ENCODE measurements at regions of chr11 and their contacts with region 1.

Region 1: GRCh38 chr11:75388386-75389275 is 10.7 kb upstream of the RPS3 start:
- DNase-seq: peak; percentile 82
- H3K4me3 Mint-ChIP-seq: no peak overlapping the region
- H3K27ac Mint-ChIP-seq: no peak overlapping the region
- H3K4me1 Mint-ChIP-seq: peaks cover 12% of the 10 kb centered on the region
- H3K27me3 Mint-ChIP-seq: peaks cover 10% of the 10 kb centered on the region

Region 2: GRCh38 chr11:75270896-75271418 is 117.7 kb before region 1 on chr11:
- CTCF ChIA-PET with region 1: interaction called, 17 read pairs
- POLR2A ChIA-PET with region 1: no interaction called
- DNase-seq: peak; percentile 47
- H3K4me3 Mint-ChIP-seq: no peak overlapping the region
- H3K27ac Mint-ChIP-seq: peak overlapping the region; percentile 63
- H3K4me1 Mint-ChIP-seq: peaks cover 38% of the 10 kb centered on the region
- H3K27me3 Mint-ChIP-seq: no peaks in the 10 kb centered on the region

Region 3: DNA sequence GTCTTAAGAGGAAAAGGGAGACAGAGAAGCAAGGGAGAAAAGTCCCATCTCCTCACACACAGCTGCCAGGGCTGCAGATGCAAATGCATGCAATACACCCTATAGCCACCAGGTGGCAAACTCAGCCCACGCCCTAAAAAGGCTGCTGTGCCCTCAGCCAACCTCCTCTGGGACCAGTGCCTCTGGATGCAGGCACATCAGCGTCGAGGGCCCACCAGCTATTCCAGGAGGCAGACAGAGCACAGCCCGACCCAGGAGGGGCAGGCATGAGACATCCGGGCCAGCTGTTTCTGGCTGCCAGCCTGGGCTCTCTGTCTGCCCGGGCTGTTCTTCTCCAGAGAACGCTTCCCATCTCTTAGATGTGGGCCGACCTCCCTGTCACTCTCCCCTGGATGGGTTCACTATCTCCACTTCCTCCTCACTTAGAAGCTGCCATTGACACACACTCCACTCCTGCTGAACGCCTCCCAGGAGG is 108.4 kb before region 1 on chr11:
- CTCF ChIA-PET with region 1: interaction called, 44 read pairs
- POLR2A ChIA-PET with region 1: interaction called, 3 read pairs
- DNase-seq: peak; percentile 80
- H3K4me3 Mint-ChIP-seq: no peak overlapping the region
- H3K27ac Mint-ChIP-seq: peak overlapping the region; percentile 37
- H3K4me1 Mint-ChIP-seq: peaks cover 36% of the 10 kb centered on the region
- H3K27me3 Mint-ChIP-seq: no peaks in the 10 kb centered on the region

Region 4: GRCh38 chr11:75328426-75329277 is 60.0 kb before region 1 on chr11:
- CTCF ChIA-PET with region 1: interaction called, 13 read pairs
- POLR2A ChIA-PET with region 1: no interaction called
- DNase-seq: peak; percentile 82
- H3K4me3 Mint-ChIP-seq: peak overlapping the region; percentile 41
- H3K27ac Mint-ChIP-seq: peak overlapping the region; percentile 93
- H3K4me1 Mint-ChIP-seq: peaks cover 67% of the 10 kb centered on the region
- H3K27me3 Mint-ChIP-seq: no peaks in the 10 kb centered on the region

Region 5: GRCh38 chr11:75342903-75343870 is 45.4 kb before region 1 on chr11:
- CTCF ChIA-PET with region 1: interaction called, 11 read pairs
- POLR2A ChIA-PET with region 1: no interaction called
- DNase-seq: no peak
- H3K4me3 Mint-ChIP-seq: no peak overlapping the region
- H3K27ac Mint-ChIP-seq: peak overlapping the region; percentile 39
- H3K4me1 Mint-ChIP-seq: peaks cover 93% of the 10 kb centered on the region
- H3K27me3 Mint-ChIP-seq: no peaks in the 10 kb centered on the region

Region 6: GRCh38 chr11:75371941-75372789 is 16.5 kb before region 1 on chr11:
- CTCF ChIA-PET with region 1: interaction called, 11 read pairs
- POLR2A ChIA-PET with region 1: no interaction called
- DNase-seq: no peak
- H3K4me3 Mint-ChIP-seq: no peak overlapping the region
- H3K27ac Mint-ChIP-seq: peak overlapping the region; percentile 27
- H3K4me1 Mint-ChIP-seq: peaks cover 29% of the 10 kb centered on the region
- H3K27me3 Mint-ChIP-seq: no peaks in the 10 kb centered on the region

Region 7: GRCh38 chr11:75490221-75491181 is 101.9 kb after region 1 on chr11:
- CTCF ChIA-PET with region 1: no interaction called
- POLR2A ChIA-PET with region 1: no interaction called
- DNase-seq: no peak
- H3K4me3 Mint-ChIP-seq: no peak overlapping the region
- H3K27ac Mint-ChIP-seq: no peak overlapping the region
- H3K4me1 Mint-ChIP-seq: peaks cover 27% of the 10 kb centered on the region
- H3K27me3 Mint-ChIP-seq: no peaks in the 10 kb centered on the region

Region 8: DNA sequence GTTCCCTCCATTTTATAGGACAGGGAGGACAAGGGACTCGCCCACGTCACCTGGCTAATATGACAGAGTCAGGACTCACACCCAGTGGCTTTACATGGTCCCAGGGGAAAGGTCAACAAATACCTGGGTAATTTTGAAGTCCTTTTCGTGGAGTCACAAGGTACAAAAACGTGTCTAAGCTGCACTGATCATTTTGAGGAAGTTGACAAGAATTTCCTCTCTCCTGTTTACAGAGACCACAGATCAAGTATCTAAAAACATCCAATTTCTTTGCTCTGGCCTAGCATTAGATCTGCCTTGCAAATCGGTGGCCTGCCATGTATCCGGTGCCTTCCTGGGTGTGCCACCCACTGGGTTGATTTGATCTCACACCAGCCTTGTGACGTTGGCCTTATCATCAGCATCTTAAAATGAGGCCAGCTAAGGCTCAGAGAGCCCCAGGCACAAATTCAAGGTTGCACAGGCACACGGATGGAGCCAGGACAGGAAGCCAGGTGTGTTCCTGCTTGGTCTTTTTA is 119.5 kb after region 1 on chr11:
- CTCF ChIA-PET with region 1: no interaction called
- POLR2A ChIA-PET with region 1: no interaction called
- DNase-seq: peak; percentile 81
- H3K4me3 Mint-ChIP-seq: peak overlapping the region; percentile 33
- H3K27ac Mint-ChIP-seq: peak overlapping the region; percentile 95
- H3K4me1 Mint-ChIP-seq: peaks cover 29% of the 10 kb centered on the region
- H3K27me3 Mint-ChIP-seq: no peaks in the 10 kb centered on the region

Region 9: DNA sequence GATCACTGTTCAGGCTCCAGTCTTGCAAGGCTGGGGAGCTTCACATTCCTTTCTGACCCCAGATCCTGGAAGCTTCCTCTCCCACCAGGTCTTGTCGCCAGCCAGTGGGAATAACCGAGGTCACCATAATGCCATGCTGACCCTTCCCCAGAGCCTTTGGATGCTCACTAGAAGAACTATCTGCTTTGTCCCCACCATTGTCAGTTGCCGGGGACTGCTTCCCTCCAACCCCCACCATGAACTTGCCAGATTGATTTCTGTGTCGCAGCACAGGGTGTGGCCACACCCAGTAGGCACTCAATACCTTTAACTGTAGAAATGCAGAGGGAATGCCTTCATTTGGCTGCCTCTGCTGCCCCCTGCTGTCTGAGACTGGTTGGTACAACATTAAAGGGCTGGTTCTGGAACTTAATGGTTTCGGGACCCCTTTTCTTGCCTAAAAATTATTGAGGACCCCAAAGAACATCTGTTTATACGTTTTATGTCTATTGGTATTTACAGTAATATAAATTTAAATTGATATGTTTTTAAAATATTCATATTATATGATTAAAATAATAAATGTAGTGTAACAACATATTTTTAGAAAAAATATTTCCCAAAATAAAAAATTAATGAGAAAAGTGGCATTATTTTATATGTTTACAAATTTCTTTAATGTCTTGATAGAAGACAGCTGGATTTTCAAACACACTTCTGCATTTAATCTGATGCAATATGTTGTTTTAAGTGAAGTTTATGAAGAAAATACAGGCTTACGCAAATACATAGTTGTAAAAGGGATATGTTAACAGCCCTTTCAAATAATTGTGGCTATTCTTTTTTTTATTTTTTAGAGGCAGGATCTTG is 143.8 kb after region 1 on chr11:
- CTCF ChIA-PET with region 1: interaction called, 23 read pairs
- POLR2A ChIA-PET with region 1: no interaction called
- DNase-seq: peak; percentile 89
- H3K4me3 Mint-ChIP-seq: peak overlapping the region; percentile 10
- H3K27ac Mint-ChIP-seq: peak overlapping the region; percentile 79
- H3K4me1 Mint-ChIP-seq: peaks cover 61% of the 10 kb centered on the region
- H3K27me3 Mint-ChIP-seq: no peaks in the 10 kb centered on the region

Region 10: GRCh38 chr11:76062733-76063132 is 674.1 kb after region 1 on chr11:
- CTCF ChIA-PET with region 1: no interaction called
- POLR2A ChIA-PET with region 1: no interaction called
- DNase-seq: no peak
- H3K4me3 Mint-ChIP-seq: no peak overlapping the region
- H3K27ac Mint-ChIP-seq: no peak overlapping the region
- H3K4me1 Mint-ChIP-seq: no peaks in the 10 kb centered on the region
- H3K27me3 Mint-ChIP-seq: no peaks in the 10 kb centered on the region

Measured in activated CD4-positive, alpha-beta T cell treated with anti-CD3 and anti-CD28 coated beads, Interleukin-2, amount 10 ng/mL, durations not matched to agents 7 days and 5 days (primary cell).